Dorsolateral prefrontal cortex (tissue), 120 donors: ENCODE measurements at regions of chr1 and their contacts with region 1.

Region 1: DNA sequence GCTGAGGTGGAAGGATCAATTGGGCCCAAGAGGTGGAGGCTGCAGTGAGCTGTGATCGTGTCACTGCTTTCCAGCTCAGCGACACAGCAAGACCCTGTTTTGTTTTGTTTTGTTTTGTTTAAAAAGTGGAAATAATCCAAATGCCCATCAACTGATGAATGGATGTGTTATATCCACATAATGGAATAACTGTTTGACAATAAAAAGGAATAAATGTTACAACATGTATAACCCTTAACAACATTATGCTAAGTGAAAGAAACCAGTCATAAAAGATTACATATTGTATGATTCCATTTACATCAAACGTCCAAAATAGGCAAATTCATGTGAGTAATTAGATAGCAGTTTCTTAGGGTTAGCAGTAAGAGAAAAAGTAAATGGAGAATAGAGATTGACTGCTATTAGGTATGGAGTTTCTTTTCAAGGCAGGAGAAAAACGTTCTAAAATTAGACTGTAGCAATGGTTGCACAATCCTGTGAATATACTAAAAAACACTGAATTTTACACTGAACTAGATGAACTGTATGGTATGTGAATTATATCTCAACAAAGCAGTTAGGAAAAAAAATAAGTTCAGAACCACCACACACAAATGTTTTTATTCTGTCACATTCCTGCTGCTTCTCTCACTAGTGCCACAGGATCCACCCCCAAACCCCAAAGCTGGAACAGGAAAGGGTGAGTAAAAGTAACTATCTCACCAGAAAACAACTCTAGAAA is 15.7 kb downstream of the FOXJ3 start:
- DNase-seq: no peak
- H3K4me3 ChIP-seq: peak overlapping the region in 5 of 59 donors; percentile 1 to 18 (median 10)
- H3K27ac ChIP-seq: peak overlapping the region in 55 of 59 donors; percentile 2 to 85 (median 63)
- H3K27me3 ChIP-seq: no peaks in the 10 kb centered on the region
- CTCF ChIP-seq: peak in 1 of 56 donors; percentile 7

Region 2: DNA sequence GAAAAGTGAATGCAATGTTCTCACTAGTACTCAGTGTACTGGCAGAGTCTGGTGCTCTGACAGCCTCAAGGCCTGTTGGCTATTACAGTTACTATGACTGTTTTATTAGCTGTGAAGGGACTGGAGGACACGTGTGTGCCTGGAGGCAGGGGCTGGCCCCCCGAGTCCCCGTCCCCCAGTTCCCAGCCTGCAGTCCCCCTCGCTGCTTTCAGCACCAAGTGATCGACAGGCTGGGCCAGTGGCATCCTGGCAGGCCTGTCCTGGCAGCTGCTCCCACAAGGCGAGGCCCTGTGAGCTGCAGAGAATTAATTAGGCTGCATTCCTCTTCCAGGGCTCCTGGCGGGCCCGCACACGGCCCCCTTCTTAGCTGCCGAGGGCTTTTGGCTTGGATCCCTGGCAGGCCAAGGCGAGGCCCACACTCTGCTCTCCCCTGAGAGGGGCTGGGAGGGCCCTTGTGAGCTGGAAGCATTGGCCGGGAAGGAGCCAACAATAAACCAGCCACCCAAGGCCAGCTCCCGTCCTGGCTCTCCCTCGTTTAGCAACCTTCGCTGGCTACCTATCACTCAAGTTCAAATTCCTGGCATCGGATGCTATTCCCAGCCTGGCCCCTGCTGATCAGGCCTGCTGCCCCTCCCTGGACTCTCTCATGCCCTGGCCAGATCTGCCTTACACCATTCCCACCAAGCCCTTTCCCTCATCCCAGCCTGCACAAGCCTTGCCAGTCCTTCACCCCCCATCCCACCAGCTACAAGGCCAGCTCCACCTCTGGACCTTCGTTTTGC is 844.6 kb before region 1 on chr1:
- intact Hi-C with region 1: no loop called
- DNase-seq: peak in 5 of 10 donors; percentile 37 to 69 (median 65)
- H3K4me3 ChIP-seq: no peak overlapping the region
- H3K27ac ChIP-seq: peak overlapping the region in 8 of 59 donors; percentile 2 to 53 (median 24)
- H3K27me3 ChIP-seq: no peaks in the 10 kb centered on the region
- CTCF ChIP-seq: no peak

Region 3: DNA sequence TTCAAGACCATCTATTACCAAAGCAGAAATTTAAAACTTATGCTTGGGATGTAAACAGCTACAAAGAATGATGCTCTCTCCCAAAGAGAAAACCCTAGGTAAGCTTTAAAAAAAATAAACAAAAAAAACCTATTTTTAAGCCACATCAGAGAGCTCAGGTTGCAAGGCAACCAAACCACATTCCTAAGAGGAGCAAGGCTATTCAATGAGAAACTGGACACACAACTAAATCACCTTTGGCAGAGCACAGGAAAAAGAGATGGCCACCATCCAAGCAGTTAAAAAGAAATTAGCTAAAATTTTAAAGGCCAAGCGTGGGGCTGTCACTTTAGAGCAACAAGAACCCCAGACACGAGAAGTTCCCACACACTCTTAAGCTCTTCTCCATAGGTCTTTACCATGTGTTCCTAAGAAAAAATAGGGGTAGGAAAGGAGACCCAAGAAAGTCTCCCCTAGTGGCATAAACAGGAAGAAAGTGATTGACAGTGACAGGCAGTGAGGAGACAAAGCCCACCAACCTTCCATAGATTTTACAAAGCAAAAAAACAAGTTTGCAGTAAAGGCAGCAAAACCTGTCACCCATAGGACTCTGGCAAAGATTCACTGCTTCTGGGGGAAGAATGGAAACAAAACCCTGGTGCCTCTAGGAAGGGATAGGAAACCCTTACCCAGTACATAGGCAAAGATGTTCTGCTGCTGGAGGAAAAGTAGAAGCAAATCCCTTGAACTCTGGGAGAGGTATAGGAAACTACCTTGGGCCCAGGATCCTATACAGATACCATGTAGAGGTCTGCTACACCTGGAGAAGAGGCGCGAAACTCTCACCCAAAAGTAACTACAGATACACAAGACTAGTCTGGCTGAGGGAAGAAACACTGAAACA is 52.8 kb before region 1 on chr1:
- intact Hi-C with region 1: loop called in 1 of 2 experiments (anchors 10 kb)
- DNase-seq: no peak
- H3K4me3 ChIP-seq: no peak overlapping the region
- H3K27ac ChIP-seq: no peak overlapping the region
- H3K27me3 ChIP-seq: no peaks in the 10 kb centered on the region
- CTCF ChIP-seq: peak in 2 of 56 donors; percentile 8 to 17